ENCODE measurements at regions of chr9 and their contacts with region 1.

Region 1: DNA sequence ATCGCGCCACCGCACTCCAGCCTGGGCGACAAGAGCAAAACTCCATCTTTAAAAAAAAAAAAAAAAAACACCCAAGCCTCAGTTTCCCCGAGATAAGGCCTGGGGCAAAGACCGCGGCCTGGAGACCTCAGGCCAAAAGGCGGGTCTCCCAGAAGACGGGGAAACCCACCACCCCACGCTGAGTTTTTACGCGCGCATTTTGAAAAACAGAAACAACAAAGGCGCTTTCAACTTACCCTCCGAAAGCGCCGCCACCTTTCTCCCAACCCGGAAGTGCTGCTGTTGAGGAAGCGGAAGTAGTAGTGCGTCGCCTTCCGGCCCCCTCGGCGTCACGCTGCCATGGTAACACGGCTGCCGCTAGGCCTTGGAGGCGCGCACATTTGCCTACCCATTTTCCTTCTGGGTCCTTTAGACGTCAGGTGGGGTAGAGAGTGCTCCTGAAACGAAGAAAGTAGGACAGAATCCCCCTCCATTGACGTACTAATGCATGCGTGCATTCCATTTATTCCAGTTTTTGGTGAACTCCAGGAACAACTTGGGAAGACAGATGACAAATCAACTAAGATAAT is at the start of gene TTF1:
- DNase-seq: peak; percentile 98
- H3K4me3 Mint-ChIP-seq: peak within 1 kb of the TSS; percentile 79
- H3K27ac Mint-ChIP-seq: peak within 1 kb of the TSS; percentile 92
- H3K4me1 Mint-ChIP-seq: peaks cover 52% of the 10 kb centered on the region
- H3K27me3 Mint-ChIP-seq: peaks cover 24% of the 10 kb centered on the region
- total RNA-seq, gene TTF1: 33.6 and 34.8 TPM in 2 replicates

Region 2: DNA sequence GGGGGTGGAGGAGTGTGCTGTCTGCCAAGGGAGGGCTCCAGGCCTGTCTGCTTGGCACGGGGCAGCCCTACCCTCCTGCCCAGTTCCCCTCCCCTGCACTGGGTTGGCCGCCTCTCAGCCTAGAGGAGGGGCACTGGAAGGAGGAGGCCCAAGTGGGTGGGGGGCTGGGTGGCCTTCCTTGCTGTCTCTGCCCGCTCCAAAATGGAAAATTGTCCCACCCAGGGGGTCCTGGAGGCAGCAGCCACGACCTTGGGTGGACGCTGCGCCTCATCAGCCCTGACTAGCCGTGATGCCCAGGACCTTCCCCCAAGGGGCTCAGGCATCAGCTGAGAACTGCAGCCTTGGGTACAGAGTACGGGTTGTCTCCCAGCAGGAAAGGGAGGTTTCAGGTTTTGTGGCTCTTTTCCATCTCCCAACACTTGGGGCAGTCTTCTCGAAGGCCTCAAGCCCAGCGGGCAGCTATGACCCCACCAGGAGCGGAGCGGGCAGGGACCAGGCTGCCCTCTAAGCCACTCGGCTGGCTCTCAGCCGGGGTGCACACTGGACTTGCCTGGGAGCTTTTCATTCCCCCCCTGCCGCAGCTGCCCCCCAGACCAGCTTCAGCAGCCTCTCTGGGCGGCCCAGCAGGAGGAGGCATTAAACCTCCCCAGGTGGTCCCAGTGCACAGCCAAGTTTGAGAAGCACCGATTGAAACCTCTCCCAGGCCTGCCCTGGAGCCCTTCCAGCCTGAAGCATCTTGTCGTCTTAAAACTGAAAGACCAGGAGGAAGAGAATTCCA is 224.1 kb before region 1 on chr9:
- intact Hi-C with region 1: no loop called
- DNase-seq: no peak
- H3K4me3 Mint-ChIP-seq: no peak overlapping the region
- H3K27ac Mint-ChIP-seq: no peak overlapping the region
- H3K4me1 Mint-ChIP-seq: peaks cover 2% of the 10 kb centered on the region
- H3K27me3 Mint-ChIP-seq: peaks cover 9% of the 10 kb centered on the region

Region 3: GRCh38 chr9:132507746-132508469 is 101.3 kb after region 1 on chr9:
- intact Hi-C with region 1: loop called (anchors 1 kb)
- DNase-seq: peak; percentile 90
- H3K4me3 Mint-ChIP-seq: no peak overlapping the region
- H3K27ac Mint-ChIP-seq: no peak overlapping the region
- H3K4me1 Mint-ChIP-seq: peaks cover 8% of the 10 kb centered on the region
- H3K27me3 Mint-ChIP-seq: peaks cover 13% of the 10 kb centered on the region

Region 4: DNA sequence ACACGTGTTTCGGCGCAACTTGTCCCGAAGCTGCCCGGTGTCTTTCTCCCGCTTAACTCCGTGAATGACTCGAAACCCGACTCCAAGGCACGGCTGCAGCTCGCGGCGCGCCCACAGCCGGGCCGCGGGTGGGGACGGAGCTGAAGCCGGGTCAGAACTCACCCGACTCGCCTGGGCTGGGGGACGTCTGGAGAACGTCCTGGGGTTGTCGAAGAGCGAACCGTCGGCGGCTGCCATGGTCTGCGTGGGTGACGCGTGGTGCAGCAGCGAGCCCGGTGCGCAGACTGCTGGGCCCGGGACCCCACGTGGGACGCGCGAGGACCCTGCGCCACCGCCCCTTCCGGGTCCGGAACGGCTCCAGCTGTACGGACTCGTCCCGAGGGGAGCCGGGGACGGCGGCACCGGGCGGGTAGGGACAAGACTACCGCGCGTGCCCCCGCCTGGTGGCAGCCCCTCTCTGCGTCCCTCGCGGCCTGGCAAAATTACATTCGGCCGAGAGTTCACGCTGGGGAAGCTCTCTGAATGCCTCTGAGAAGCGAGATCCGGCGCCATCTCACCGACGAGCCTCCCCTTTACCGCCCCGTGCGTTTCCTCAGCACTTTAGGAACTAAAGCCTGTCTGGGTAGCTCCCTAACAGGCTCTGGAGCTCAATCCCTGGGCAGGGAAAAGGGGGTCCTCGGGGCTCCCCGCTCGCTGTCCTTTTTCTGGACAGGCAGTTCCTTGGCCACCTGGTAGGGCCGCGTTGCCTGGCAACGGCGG is 263.2 kb after region 1 on chr9 and contains the start of gene DDX31:
- intact Hi-C with region 1: loop called (anchors 2 kb)
- DNase-seq: peak; percentile 96
- H3K4me3 Mint-ChIP-seq: peak within 1 kb of the TSS; percentile 96
- H3K27ac Mint-ChIP-seq: peak within 1 kb of the TSS; percentile 93
- H3K4me1 Mint-ChIP-seq: peaks cover 39% of the 10 kb centered on the region
- H3K27me3 Mint-ChIP-seq: no peaks in the 10 kb centered on the region
- total RNA-seq, gene DDX31: 28.2 and 31.8 TPM in 2 replicates

Region 5: DNA sequence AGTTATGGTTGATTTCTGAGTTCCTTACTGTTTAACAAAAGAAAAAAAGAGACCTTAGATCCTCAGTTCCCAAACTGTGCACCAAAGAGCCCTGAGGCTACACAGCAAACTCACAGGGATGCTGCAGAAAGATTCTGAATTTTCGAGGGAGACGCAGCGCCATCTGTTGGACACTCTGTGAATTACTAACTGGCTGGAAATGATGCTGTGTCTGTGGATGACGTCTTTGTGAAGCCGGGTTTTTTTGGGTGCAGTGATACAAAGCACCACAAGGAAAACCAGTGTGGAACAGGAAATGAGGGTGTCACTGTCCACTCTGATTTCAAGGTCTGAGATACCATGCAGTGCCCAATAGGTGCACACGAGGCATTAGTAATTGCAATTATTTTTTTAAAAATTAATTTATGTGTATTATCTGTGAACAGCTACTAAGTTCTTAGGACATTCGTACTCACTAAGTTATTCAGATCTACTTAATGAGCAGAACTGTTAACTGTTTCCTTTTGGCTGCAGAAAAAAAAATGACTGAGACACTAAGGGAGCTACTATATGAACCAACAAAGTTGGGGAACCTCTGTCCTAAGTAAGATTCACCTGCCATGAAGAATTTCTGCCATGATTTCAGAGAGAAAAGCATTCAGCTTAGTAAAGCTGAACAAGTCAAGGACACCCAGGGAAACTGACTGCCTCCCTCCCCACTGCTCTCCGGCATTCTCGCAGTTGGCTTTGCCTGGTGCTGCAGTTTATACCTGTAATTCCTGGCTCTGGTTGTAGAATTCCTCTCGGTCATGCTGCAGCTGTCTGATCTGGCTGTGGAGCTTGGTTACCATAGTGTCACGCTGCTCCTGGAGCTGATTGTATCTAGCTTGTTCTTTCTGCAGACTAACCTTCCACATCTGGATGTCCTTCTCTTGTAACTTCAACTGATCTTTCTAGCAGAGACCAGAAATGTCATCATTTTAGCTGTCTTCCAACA is 495.5 kb after region 1 on chr9:
- intact Hi-C with region 1: loop called (anchors 5 kb)
- DNase-seq: peak; percentile 94
- H3K4me3 Mint-ChIP-seq: no peak overlapping the region
- H3K27ac Mint-ChIP-seq: no peak overlapping the region
- H3K4me1 Mint-ChIP-seq: peaks cover 4% of the 10 kb centered on the region
- H3K27me3 Mint-ChIP-seq: no peaks in the 10 kb centered on the region

Region 6: DNA sequence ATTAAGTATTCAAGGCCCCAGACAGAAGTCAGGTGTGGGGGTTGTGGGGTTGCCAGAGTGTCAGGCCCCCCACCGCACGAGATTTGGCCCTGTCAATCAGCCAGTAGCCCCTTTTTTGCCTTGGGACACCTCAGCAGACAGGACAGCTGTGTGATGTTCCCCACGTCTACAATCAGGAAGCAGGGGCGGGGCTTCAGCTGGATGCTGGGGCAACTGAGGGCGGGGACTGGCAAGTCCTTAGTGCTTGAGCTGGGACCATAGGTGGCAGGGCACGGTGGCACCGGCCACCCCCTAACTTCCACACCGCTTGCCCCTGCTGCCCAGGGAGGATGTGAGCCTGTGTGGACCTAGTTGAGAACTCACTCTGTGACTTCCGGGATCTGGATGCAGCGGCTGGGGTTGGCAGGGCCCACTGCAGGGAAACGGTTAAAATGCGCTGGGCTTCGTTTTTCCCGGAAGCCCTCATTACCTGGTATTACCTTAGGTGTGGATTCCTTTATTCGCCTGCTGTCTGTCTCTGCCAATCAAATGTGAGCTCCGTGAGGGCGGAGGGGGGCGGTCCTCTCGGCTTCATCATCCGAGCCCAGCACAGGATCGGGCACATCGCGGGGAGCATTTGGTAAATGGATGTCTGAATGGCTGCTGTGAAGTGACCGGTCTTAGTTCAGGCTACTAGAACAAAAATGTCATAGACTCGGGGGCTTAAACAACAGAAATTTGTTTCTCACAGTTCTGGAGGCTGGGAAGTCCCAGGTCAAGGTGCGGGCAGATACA is 616.7 kb after region 1 on chr9:
- intact Hi-C with region 1: loop called (anchors 1 kb)
- DNase-seq: peak; percentile 89
- H3K4me3 Mint-ChIP-seq: peak overlapping the region; percentile 56
- H3K27ac Mint-ChIP-seq: peak overlapping the region; percentile 45
- H3K4me1 Mint-ChIP-seq: peaks cover 17% of the 10 kb centered on the region
- H3K27me3 Mint-ChIP-seq: peaks cover 4% of the 10 kb centered on the region

Measured in activated CD4-positive, alpha-beta T cell treated with anti-CD3 and anti-CD28 coated beads, Interleukin-2, amount 10 ng/mL, durations not matched to agents 24 days and 14 days (primary cell).